CD4-positive, alpha-beta memory T cell (primary cell): ENCODE measurements at regions of chr7 and their contacts with region 1.

Region 1: GRCh38 chr7:55887821-55888247 is 578 bp downstream of the ZNF713 start:
- DNase-seq: peak in 2 of 5 donors; percentile 8 to 17
- H3K4me3 ChIP-seq: no peak overlapping the region
- H3K4me3 Mint-ChIP-seq: peak overlapping the region; percentile 81 to 89 (median 87)
- H3K27ac ChIP-seq: no peak overlapping the region
- H3K27ac Mint-ChIP-seq: peak overlapping the region; percentile 74 to 95 (median 88)
- H3K4me1 ChIP-seq: peaks cover 7% of the 10 kb centered on the region
- H3K4me1 Mint-ChIP-seq: peaks cover 5 to 10% (median 6%) of the 10 kb centered on the region in 4 donors
- H3K27me3 ChIP-seq: no peaks in the 10 kb centered on the region
- H3K27me3 Mint-ChIP-seq: peaks cover 0 to 2% of the 10 kb centered on the region in 2 donors

Region 2: GRCh38 chr7:54758702-54759592 is 1128.9 kb before region 1 on chr7 and contains the start of gene SEC61G:
- CTCF ChIA-PET with region 1: no interaction called
- POLR2A ChIA-PET with region 1: no interaction called
- intact Hi-C with region 1: loop called (anchors 10 kb)
- DNase-seq: peak; percentile 95 to 96 (median 95)
- H3K4me3 ChIP-seq: peak within 1 kb of the TSS; percentile 62 to 97
- H3K4me3 Mint-ChIP-seq: peak within 1 kb of the TSS; percentile 99 to 100 (median 100)
- H3K27ac ChIP-seq: peak within 1 kb of the TSS; percentile 81
- H3K27ac Mint-ChIP-seq: peak within 1 kb of the TSS; percentile 95 to 99 (median 98)
- H3K4me1 ChIP-seq: peaks cover 22% of the 10 kb centered on the region
- H3K4me1 Mint-ChIP-seq: peaks cover 15 to 51% (median 32%) of the 10 kb centered on the region in 4 donors
- H3K27me3 ChIP-seq: no peaks in the 10 kb centered on the region
- H3K27me3 Mint-ChIP-seq: no peaks in the 10 kb centered on the region
- total RNA-seq, gene SEC61G: 67.0 to 73.9 TPM

Region 3: GRCh38 chr7:55951637-55952351 is 64.0 kb after region 1 on chr7 and contains the start of gene MRPS17:
- CTCF ChIA-PET with region 1: no interaction called
- POLR2A ChIA-PET with region 1: no interaction called
- intact Hi-C with region 1: loop called (anchors 1 kb)
- DNase-seq: peak; percentile 92 to 95 (median 93)
- H3K4me3 ChIP-seq: peak within 1 kb of the TSS; percentile 88 to 96
- H3K4me3 Mint-ChIP-seq: peak within 1 kb of the TSS; percentile 92 to 97 (median 94)
- H3K27ac ChIP-seq: peak within 1 kb of the TSS; percentile 71
- H3K27ac Mint-ChIP-seq: peak within 1 kb of the TSS; percentile 87 to 99 (median 98)
- H3K4me1 ChIP-seq: peaks cover 12% of the 10 kb centered on the region
- H3K4me1 Mint-ChIP-seq: peaks cover 12 to 32% (median 18%) of the 10 kb centered on the region in 4 donors
- H3K27me3 ChIP-seq: no peaks in the 10 kb centered on the region
- H3K27me3 Mint-ChIP-seq: no peaks in the 10 kb centered on the region
- total RNA-seq, gene MRPS17: 11.5 to 13.2 TPM